Caco-2 (cell line): ENCODE measurements at regions of chr11 and their contacts with region 1.

Region 1: DNA sequence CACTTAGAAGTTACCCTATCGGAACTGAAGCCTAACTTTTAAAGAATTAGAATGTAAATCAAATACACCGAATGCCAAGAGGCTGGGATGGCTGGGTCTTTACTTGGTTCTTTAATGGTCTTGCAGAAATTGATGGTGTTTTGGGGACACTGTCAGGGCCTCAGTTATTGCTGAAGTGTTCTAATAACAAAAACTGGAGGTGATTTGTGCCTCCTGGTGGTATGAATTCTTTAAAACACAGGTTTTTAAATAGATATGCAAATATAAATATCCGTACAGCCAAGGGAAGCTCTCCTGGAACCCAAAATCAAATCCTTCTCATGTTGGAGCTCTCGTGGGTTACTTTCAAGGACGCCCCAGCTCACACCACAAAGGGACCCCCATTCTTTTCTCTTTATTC is 19.3 kb upstream of the TMPRSS5 start:
- DNase-seq: peak in 1 of 2 experiments; percentile 20
- H3K4me3 ChIP-seq: no peak overlapping the region
- H3K4me3 Mint-ChIP-seq: peak overlapping the region; percentile 44
- H3K27ac Mint-ChIP-seq: peak overlapping the region; percentile 79
- H3K4me1 ChIP-seq: peaks cover 79% of the 10 kb centered on the region
- H3K4me1 Mint-ChIP-seq: peaks cover 67% of the 10 kb centered on the region
- H3K27me3 ChIP-seq: no peaks in the 10 kb centered on the region
- H3K27me3 Mint-ChIP-seq: no peaks in the 10 kb centered on the region
- CTCF ChIP-seq: peak; percentile 19 to 48

Region 2: GRCh38 chr11:113314389-113315301 is 410.8 kb before region 1 on chr11 and contains the start of gene TTC12:
- CTCF ChIA-PET with region 1: interaction called, 14 read pairs
- POLR2A ChIA-PET with region 1: interaction called, 18 read pairs
- intact Hi-C with region 1: loop called (anchors 1 kb)
- DNase-seq: peak; percentile 97 to 99
- H3K4me3 ChIP-seq: peak within 1 kb of the TSS; percentile 72
- H3K4me3 Mint-ChIP-seq: peak within 1 kb of the TSS; percentile 70
- H3K27ac Mint-ChIP-seq: peak within 1 kb of the TSS; percentile 35
- H3K4me1 ChIP-seq: peaks cover 10% of the 10 kb centered on the region
- H3K4me1 Mint-ChIP-seq: peaks cover 6% of the 10 kb centered on the region
- H3K27me3 ChIP-seq: no peaks in the 10 kb centered on the region
- H3K27me3 Mint-ChIP-seq: no peaks in the 10 kb centered on the region
- CTCF ChIP-seq: no peak
- total RNA-seq, gene TTC12: 19.4 and 20.8 TPM in 2 replicates

Region 3: GRCh38 chr11:113540416-113541330 is 184.7 kb before region 1 on chr11:
- CTCF ChIA-PET with region 1: interaction called, 16 read pairs
- POLR2A ChIA-PET with region 1: interaction called, 8 read pairs
- intact Hi-C with region 1: loop called (anchors 1 kb)
- DNase-seq: no peak
- H3K4me3 ChIP-seq: no peak overlapping the region
- H3K4me3 Mint-ChIP-seq: no peak overlapping the region
- H3K27ac Mint-ChIP-seq: peak overlapping the region; percentile 40
- H3K4me1 ChIP-seq: peaks cover 35% of the 10 kb centered on the region
- H3K4me1 Mint-ChIP-seq: peaks cover 43% of the 10 kb centered on the region
- H3K27me3 ChIP-seq: no peaks in the 10 kb centered on the region
- H3K27me3 Mint-ChIP-seq: no peaks in the 10 kb centered on the region
- CTCF ChIP-seq: peak; percentile 9 to 26

Region 4: DNA sequence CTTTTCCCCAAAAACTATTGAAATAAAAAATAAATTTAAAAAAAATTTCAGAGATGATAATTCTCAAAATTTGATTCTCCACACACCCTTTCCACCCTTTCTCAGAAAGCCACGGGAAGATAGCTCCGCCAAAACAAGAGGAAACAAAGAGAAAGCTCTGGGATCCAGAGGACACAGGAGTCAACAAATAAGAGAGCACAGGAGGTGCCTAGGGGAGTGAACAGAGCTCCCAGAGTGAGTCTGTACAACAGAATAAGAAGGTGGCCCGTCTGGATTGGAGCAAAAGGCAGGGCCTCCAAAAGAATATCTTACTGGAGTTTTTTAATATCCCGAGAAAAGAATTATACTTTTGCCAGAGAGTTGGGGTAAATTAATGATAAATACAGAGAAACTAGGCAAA is 153.9 kb before region 1 on chr11:
- CTCF ChIA-PET with region 1: interaction called, 6 read pairs
- POLR2A ChIA-PET with region 1: interaction called, 6 read pairs
- intact Hi-C with region 1: loop called (anchors 1 kb)
- DNase-seq: no peak
- H3K4me3 ChIP-seq: no peak overlapping the region
- H3K4me3 Mint-ChIP-seq: no peak overlapping the region
- H3K27ac Mint-ChIP-seq: peak overlapping the region; percentile 65
- H3K4me1 ChIP-seq: peaks cover 59% of the 10 kb centered on the region
- H3K4me1 Mint-ChIP-seq: peaks cover 42% of the 10 kb centered on the region
- H3K27me3 ChIP-seq: no peaks in the 10 kb centered on the region
- H3K27me3 Mint-ChIP-seq: no peaks in the 10 kb centered on the region
- CTCF ChIP-seq: no peak

Region 5: DNA sequence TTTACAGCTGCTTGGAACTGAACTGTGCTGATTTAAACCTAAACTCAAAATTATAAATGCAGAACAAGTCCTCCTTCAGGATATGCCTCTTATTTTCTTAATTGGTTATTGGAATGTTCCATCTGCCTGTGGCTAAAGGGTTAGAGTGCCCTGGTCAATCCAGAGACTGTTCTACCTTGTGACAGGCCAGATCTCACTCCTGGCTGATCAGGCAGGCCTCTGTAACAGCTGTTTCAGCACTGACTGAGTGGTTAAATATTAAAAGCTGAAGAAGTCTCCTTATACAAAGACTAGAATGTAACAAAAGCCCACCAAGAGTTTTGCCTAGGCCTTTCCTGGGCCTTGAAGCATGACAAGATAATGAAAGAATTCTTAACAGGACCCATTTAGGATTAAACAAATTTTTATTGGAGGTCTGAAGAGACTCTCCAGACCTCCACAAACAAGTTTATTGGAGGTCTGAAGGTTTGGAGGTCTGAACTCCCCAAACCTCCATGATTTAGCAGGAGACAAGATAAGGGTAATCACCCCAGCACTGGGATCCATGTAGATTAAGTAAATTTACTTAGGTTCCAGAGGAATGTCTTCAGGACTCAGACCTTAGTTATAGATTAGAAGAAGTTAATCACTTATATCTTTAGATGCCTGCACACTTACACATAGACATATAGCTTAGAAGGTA is 55.1 kb before region 1 on chr11:
- CTCF ChIA-PET with region 1: interaction called, 12 read pairs
- POLR2A ChIA-PET with region 1: interaction called, 12 read pairs
- intact Hi-C with region 1: no loop called
- DNase-seq: peak; percentile 77 to 87
- H3K4me3 ChIP-seq: no peak overlapping the region
- H3K4me3 Mint-ChIP-seq: peak overlapping the region; percentile 28
- H3K27ac Mint-ChIP-seq: peak overlapping the region; percentile 99
- H3K4me1 ChIP-seq: peaks cover 82% of the 10 kb centered on the region
- H3K4me1 Mint-ChIP-seq: peaks cover 56% of the 10 kb centered on the region
- H3K27me3 ChIP-seq: no peaks in the 10 kb centered on the region
- H3K27me3 Mint-ChIP-seq: no peaks in the 10 kb centered on the region
- CTCF ChIP-seq: no peak